ENCODE measurements at regions of chr1 and their contacts with region 1.

Region 1: GRCh38 chr1:72296481-72296880 is 14.1 kb upstream of the NEGR1 start:
- ATAC-seq: no peak
- H3K4me3 ChIP-seq: no peak overlapping the region
- H3K27ac ChIP-seq: no peak overlapping the region
- H3K4me1 ChIP-seq: no peaks in the 10 kb centered on the region

Region 2: GRCh38 chr1:71919811-71920509 is 376.5 kb before region 1 on chr1:
- in situ Hi-C with region 1: no loop called
- ATAC-seq: no peak
- H3K4me3 ChIP-seq: no peak overlapping the region
- H3K27ac ChIP-seq: no peak overlapping the region
- H3K4me1 ChIP-seq: no peaks in the 10 kb centered on the region

Region 3: DNA sequence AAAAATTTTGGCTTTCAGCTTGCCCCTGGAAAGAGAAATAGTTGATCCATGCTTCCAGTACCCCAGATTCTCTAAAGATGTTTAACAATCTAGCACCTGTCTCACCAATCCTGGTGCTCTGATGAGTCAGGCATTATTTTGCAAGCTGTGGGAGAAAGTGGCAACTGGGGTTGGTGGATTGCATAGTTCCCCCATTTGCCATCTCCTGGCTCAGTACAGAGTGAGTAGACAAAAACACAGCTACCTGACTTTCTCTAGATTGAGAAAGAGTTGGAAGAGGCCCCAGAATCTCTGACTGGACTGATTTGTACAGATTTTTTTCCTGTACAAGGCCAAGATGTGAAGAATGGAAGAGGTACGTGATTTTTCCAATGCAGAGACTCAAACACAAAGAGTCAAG is 60.9 kb after region 1 on chr1:
- in situ Hi-C with region 1: loop called in 2 of 9 experiments (anchors 10 kb)
- ATAC-seq: no peak
- H3K4me3 ChIP-seq: no peak overlapping the region
- H3K27ac ChIP-seq: no peak overlapping the region
- H3K4me1 ChIP-seq: no peaks in the 10 kb centered on the region

Region 4: GRCh38 chr1:72366473-72366872 is 70.0 kb after region 1 on chr1:
- in situ Hi-C with region 1: loop called in 1 of 9 experiments (anchors 10 kb)
- ATAC-seq: no peak
- H3K4me3 ChIP-seq: no peak overlapping the region
- H3K27ac ChIP-seq: no peak overlapping the region
- H3K4me1 ChIP-seq: peaks cover 0 to 5% of the 10 kb centered on the region in 2 donors